Esophagus muscularis mucosa (tissue), 4 donors: ENCODE measurements at regions of chr3 and their contacts with region 1.

Region 1: GRCh38 chr3:49007068-49007770 is at the start of gene WDR6:
- DNase-seq: peak; percentile 99
- H3K4me3 ChIP-seq: peak within 1 kb of the TSS; percentile 65 to 94 (median 78)
- H3K27ac ChIP-seq: peak within 1 kb of the TSS; percentile 94 to 99 (median 94)
- H3K4me1 ChIP-seq: peaks cover 16 to 37% (median 30%) of the 10 kb centered on the region in 4 donors
- H3K27me3 ChIP-seq: no peaks in the 10 kb centered on the region
- CTCF ChIP-seq: peak; percentile 41 to 60 (median 41)
- EP300 ChIP-seq: no peak
- POLR2A ChIP-seq: no peak
- total RNA-seq, gene WDR6: 77.2 to 101 (median 89.0) TPM

Region 2: GRCh38 chr3:48989796-48990635 is 17.2 kb before region 1 on chr3 and contains the start of gene P4HTM:
- intact Hi-C with region 1: loop called (anchors 2 kb)
- DNase-seq: peak; percentile 95
- H3K4me3 ChIP-seq: peak within 1 kb of the TSS; percentile 85 to 98 (median 95)
- H3K27ac ChIP-seq: peak within 1 kb of the TSS; percentile 94 to 97 (median 94)
- H3K4me1 ChIP-seq: peaks cover 29 to 44% (median 41%) of the 10 kb centered on the region in 4 donors
- H3K27me3 ChIP-seq: no peaks in the 10 kb centered on the region
- CTCF ChIP-seq: peak; percentile 40 to 49 (median 48)
- EP300 ChIP-seq: no peak
- POLR2A ChIP-seq: no peak
- total RNA-seq, gene P4HTM: 25.3 to 46.4 (median 35.2) TPM